Transverse colon (tissue), 4 donors: ENCODE measurements at regions of chr1 and their contacts with region 1.

Region 1: GRCh38 chr1:214146523-214146922 is 134.4 kb upstream of the SMYD2 start:
- DNase-seq: peak; percentile 49
- H3K4me3 ChIP-seq: no peak overlapping the region
- H3K27ac ChIP-seq: no peak overlapping the region
- H3K4me1 ChIP-seq: no peaks in the 10 kb centered on the region
- H3K27me3 ChIP-seq: no peaks in the 10 kb centered on the region
- CTCF ChIP-seq: no peak
- EP300 ChIP-seq: peak; percentile 42
- POLR2A ChIP-seq: no peak

Region 2: DNA sequence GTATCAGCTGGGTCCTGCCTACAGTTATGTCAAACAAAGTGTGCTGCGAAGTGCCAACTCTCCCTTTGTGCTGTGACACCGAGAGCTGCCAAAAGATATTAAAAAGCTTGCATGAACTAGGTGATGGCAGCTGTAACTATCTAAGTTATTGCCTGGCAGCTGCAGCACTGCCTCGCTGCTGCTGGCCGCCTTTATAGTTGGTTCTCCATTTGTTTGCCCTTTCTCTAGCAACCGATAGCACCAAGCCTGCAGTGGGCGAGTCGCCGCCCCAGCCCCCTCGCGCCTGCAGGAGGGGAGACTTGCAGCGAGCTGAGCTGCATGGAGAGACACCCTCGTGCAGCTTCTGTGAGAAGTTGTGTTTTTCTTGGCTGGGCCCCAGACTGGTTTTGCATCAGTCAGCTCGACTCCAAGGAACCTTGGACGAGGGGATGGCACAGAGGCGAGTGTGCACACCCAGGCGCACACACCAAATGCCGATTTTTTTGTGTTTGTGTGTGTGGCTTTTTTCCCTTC is 764.9 kb before region 1 on chr1:
- in situ Hi-C with region 1: loop called in 1 of 4 experiments (anchors 25 kb)
- intact Hi-C with region 1: no loop called
- DNase-seq: no peak
- H3K4me3 ChIP-seq: no peak overlapping the region
- H3K27ac ChIP-seq: no peak overlapping the region
- H3K4me1 ChIP-seq: no peaks in the 10 kb centered on the region
- H3K27me3 ChIP-seq: no peaks in the 10 kb centered on the region
- CTCF ChIP-seq: no peak
- EP300 ChIP-seq: no peak
- POLR2A ChIP-seq: no peak